ENCODE measurements at regions of chr3 and their contacts with region 1.

Region 1: DNA sequence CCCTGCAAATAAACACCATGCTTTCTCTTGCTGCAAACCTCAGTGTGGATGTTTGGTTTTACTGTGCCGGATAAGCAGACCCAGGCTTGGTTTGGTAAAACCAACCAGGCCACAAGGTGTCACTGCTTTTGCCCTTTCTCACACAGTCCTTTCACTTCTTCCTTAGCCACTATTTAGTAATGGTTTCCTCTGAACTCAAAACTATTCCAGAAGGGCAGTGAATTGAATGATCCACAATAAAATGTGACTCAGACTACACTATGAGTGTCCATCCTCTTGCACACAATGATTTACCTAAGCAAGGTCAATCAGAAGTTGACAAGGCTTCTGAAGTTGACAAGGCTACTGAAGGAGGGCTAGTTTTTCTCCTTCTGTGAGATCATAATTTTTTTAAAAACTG is 552.4 kb upstream of the CCDC54 start:
- DNase-seq: peak in 1 of 2 experiments; percentile 26
- H3K4me3 ChIP-seq: no peak overlapping the region
- H3K4me3 Mint-ChIP-seq: no peak overlapping the region
- H3K27ac Mint-ChIP-seq: no peak overlapping the region
- H3K4me1 ChIP-seq: no peaks in the 10 kb centered on the region
- H3K4me1 Mint-ChIP-seq: no peaks in the 10 kb centered on the region
- H3K27me3 ChIP-seq: no peaks in the 10 kb centered on the region
- H3K27me3 Mint-ChIP-seq: no peaks in the 10 kb centered on the region
- CTCF ChIP-seq: peak; percentile 12 to 39

Region 2: DNA sequence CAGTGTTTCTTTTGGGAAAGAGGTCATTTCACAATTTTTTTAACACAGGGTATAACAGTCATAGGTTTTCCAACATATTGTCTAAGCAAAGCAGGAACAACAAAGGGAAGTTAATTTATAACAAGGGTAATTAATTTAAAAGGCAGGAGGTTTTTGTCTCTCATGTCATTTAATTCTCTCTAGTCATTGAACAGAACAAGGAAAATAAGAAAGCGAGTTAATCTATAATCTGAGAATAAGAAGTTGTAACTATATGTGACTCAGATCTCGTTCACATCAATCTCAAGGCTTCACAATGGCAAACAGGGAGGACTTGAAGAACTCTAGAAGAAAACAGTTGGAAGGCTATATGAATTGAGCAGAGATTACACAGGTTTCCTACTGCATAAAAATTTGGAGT is 27.4 kb before region 1 on chr3:
- CTCF ChIA-PET with region 1: no interaction called
- POLR2A ChIA-PET with region 1: no interaction called
- intact Hi-C with region 1: no loop called
- DNase-seq: no peak
- H3K4me3 ChIP-seq: no peak overlapping the region
- H3K4me3 Mint-ChIP-seq: no peak overlapping the region
- H3K27ac Mint-ChIP-seq: no peak overlapping the region
- H3K4me1 ChIP-seq: no peaks in the 10 kb centered on the region
- H3K4me1 Mint-ChIP-seq: no peaks in the 10 kb centered on the region
- H3K27me3 ChIP-seq: no peaks in the 10 kb centered on the region
- H3K27me3 Mint-ChIP-seq: peaks cover 2% of the 10 kb centered on the region
- CTCF ChIP-seq: no peak

Region 3: GRCh38 chr3:107064445-107065060 is 239.7 kb after region 1 on chr3:
- CTCF ChIA-PET with region 1: no interaction called
- POLR2A ChIA-PET with region 1: no interaction called
- intact Hi-C with region 1: loop called (anchors 1 kb)
- DNase-seq: peak; percentile 59 to 73
- H3K4me3 ChIP-seq: no peak overlapping the region
- H3K4me3 Mint-ChIP-seq: no peak overlapping the region
- H3K27ac Mint-ChIP-seq: no peak overlapping the region
- H3K4me1 ChIP-seq: no peaks in the 10 kb centered on the region
- H3K4me1 Mint-ChIP-seq: peaks cover 9% of the 10 kb centered on the region
- H3K27me3 ChIP-seq: no peaks in the 10 kb centered on the region
- H3K27me3 Mint-ChIP-seq: peaks cover 4% of the 10 kb centered on the region
- CTCF ChIP-seq: peak; percentile 59 to 84

Measured in Caco-2 (cell line).